IMR-90 (cell line): ENCODE measurements at regions of chr19 and their contacts with region 1.

Region 1: GRCh38 chr19:42926781-42927180 is 9.1 kb upstream of the PSG6 start:
- DNase-seq: no peak
- ATAC-seq: no peak
- H3K4me3 ChIP-seq: no peak overlapping the region
- H3K27ac ChIP-seq: no peak overlapping the region
- H3K4me1 ChIP-seq: peaks cover 2% of the 10 kb centered on the region; the same call in 1 of the 2 replicates
- H3K27me3 ChIP-seq: no peaks in the 10 kb centered on the region
- CTCF ChIP-seq: no peak
- POLR2A ChIP-seq: no peak
- RAD21 ChIP-seq: no peak

Region 2: GRCh38 chr19:43078311-43078710 is 151.5 kb after region 1 on chr19:
- CTCF ChIA-PET with region 1: no interaction called
- POLR2A ChIA-PET with region 1: no interaction called
- dilution Hi-C with region 1: no loop called
- in situ Hi-C with region 1: loop called (anchors 10 kb)
- intact Hi-C with region 1: no loop called
- DNase-seq: peak; percentile 81
- ATAC-seq: no peak
- H3K4me3 ChIP-seq: no peak overlapping the region
- H3K27ac ChIP-seq: no peak overlapping the region
- H3K4me1 ChIP-seq: no peaks in the 10 kb centered on the region
- H3K27me3 ChIP-seq: no peaks in the 10 kb centered on the region
- CTCF ChIP-seq: no peak
- POLR2A ChIP-seq: no peak
- RAD21 ChIP-seq: no peak